Caco-2 (cell line): ENCODE measurements at regions of chr1 and their contacts with region 1.

Region 1: GRCh38 chr1:27102707-27103491 is 52.0 kb downstream of the SLC9A1 start:
- DNase-seq: peak; percentile 65 to 80
- H3K4me3 ChIP-seq: no peak overlapping the region
- H3K4me3 Mint-ChIP-seq: no peak overlapping the region
- H3K27ac Mint-ChIP-seq: no peak overlapping the region
- H3K4me1 ChIP-seq: peaks cover 14% of the 10 kb centered on the region
- H3K4me1 Mint-ChIP-seq: peaks cover 13% of the 10 kb centered on the region
- H3K27me3 ChIP-seq: no peaks in the 10 kb centered on the region
- H3K27me3 Mint-ChIP-seq: no peaks in the 10 kb centered on the region
- CTCF ChIP-seq: peak; percentile 82 to 86

Region 2: DNA sequence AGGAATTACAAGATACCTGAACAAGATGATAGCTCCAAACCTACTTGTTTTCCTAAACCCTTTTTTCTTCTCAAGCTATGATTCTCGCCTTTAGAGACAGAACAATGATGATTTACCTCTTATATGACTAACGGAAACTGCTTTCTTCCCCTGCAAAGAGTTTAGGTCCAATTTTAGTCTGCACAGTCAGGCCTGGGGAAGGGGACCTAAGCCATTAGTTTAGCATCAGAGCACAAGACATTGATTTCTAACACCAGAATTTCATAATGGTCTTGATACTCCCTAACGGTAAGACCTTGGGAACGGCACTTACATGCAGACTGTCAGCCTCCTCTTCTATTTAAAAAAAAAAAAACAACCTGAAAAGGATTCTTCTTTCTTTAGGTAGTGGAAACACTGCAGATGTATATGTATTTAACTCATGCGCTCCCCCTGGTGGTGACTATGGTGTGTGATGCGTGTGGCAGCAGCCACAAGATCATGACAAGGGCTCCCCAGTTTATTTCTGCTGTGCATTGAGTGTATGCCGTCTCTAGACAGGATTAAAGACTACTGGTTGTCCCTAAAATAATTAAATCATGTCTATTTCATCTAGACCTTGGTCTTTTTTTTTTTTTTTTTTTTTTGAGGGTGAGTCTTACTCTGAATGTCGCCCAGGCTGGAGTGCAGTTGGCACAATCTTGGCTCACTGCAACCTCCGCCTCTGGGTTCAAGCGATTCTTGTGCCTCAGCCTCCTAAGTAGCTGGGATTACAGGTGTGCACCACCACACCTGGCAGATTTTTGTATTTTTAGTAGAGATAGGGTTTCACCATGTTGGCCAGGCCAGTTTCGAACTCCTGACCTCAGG is 181.8 kb after region 1 on chr1:
- CTCF ChIA-PET with region 1: interaction called, 3 read pairs
- POLR2A ChIA-PET with region 1: no interaction called
- intact Hi-C with region 1: loop called (anchors 1 kb)
- DNase-seq: peak; percentile 80 to 81
- H3K4me3 ChIP-seq: no peak overlapping the region
- H3K4me3 Mint-ChIP-seq: no peak overlapping the region
- H3K27ac Mint-ChIP-seq: no peak overlapping the region
- H3K4me1 ChIP-seq: no peaks in the 10 kb centered on the region
- H3K4me1 Mint-ChIP-seq: peaks cover 7% of the 10 kb centered on the region
- H3K27me3 ChIP-seq: no peaks in the 10 kb centered on the region
- H3K27me3 Mint-ChIP-seq: no peaks in the 10 kb centered on the region
- CTCF ChIP-seq: peak; percentile 69 to 71

Region 3: DNA sequence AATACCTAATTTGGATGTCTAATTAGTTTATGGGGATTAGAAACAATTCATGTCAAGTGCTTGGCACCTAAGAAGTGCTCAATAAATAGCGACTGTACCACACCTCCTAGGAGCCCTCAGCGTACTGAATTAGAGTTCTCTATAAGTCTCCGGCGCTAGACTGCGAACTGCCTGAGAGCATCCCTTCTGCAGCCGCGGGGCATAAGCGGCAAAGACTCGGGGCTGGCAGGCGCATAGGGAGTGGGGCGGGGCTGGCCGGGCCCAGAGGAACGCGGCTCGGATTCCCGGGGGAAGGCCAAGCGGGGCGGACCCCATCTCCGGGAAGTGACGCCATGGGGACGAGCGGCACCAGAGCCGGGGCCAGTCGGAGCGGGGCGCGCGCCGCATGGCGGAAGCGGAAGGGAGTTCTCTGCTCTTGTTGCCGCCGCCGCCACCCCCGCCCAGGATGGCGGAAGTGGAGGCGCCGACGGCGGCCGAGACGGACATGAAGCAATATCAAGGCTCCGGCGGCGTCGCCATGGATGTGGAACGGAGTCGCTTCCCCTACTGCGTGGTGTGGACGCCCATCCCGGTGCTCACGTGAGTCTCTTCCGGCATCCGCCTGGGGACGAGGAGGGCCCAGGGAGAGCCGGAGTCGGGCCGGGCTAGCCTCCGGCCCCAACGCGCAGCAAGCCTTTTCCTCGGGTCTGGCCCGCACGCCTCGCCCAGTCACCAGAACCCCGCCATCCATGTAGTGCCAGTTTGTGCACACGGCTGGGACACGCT is 219.1 kb after region 1 on chr1 and contains the start of gene TMEM222:
- CTCF ChIA-PET with region 1: no interaction called
- POLR2A ChIA-PET with region 1: no interaction called
- intact Hi-C with region 1: no loop called
- DNase-seq: peak; percentile 94 to 96
- H3K4me3 ChIP-seq: peak within 1 kb of the TSS; percentile 65
- H3K4me3 Mint-ChIP-seq: peak within 1 kb of the TSS; percentile 87
- H3K27ac Mint-ChIP-seq: peak within 1 kb of the TSS; percentile 87
- H3K4me1 ChIP-seq: no peaks in the 10 kb centered on the region
- H3K4me1 Mint-ChIP-seq: no peaks in the 10 kb centered on the region
- H3K27me3 ChIP-seq: no peaks in the 10 kb centered on the region
- H3K27me3 Mint-ChIP-seq: no peaks in the 10 kb centered on the region
- CTCF ChIP-seq: no peak
- total RNA-seq, gene TMEM222: 26.7 and 32.3 TPM in 2 replicates